ENCODE measurements at regions of chr1 and their contacts with region 1.

Region 1: DNA sequence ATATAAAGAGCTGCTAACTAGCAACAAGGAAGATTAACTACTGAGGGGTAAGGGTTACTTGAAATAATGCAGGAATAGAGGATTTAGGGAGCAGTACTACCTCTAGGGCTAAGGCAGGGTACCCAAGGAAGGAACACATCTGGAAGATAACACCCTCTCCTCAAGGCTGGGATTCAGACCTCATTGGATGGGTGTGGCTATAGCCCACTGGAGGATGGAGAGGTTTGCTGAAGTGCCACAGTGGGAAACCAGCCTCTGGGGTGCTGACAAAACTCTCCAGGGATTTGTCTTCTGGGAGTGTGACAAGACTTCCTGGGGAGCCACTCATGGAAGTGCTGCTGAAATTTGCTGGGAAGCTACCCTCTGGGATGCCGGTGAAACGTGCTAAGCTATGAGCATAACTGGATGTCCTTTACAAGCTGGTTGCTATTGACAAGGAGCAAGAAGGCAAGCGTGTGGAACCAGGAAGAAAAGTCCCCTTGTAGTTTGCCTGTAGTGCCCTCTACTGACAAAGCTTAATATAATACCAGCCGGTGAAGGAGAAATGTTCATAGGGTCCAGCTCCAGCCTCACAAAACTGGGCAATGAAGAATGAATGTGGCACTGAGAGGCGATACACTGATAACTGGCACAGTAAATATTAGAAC is 122.8 kb upstream of the USP24 start:
- DNase-seq: peak; percentile 7 to 66
- ATAC-seq: peak in 1 of 2 experiments; percentile 61; a peak in 3 of 6 replicates
- H3K4me3 ChIP-seq: no peak overlapping the region
- H3K27ac ChIP-seq: peak overlapping the region in 1 of 2 experiments; percentile 61; a peak in 2 of 6 replicates
- H3K4me1 ChIP-seq: no peaks in the 10 kb centered on the region
- CTCF ChIP-seq: no peak
- EP300 ChIP-seq: no peak
- POLR2A ChIP-seq: no peak
- RAD21 ChIP-seq: peak in 1 of 2 experiments; percentile 59; a peak in 3 of 5 replicates

Region 2: DNA sequence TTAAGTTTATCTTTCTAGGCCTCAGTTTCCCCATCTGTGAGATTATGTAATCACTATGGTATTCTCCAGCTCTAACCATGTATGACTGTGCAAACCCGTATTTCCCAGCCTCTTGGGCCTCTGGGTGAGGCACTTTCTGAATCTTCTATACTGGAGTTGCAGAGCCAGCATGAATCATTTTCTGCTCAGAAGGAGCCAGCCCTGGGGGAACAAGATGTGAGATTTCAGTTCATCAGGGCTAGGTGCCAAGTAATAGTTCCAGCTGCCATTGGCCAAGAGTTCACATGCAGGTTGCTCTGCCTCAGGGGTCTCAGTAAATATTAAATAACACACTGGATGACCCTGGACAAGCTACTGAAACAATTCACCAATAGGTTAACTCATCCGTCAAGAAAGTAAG is 75.1 kb before region 1 on chr1:
- CTCF ChIA-PET with region 1: no interaction called
- POLR2A ChIA-PET with region 1: no interaction called
- DNase-seq: no peak
- ATAC-seq: no peak
- H3K4me3 ChIP-seq: no peak overlapping the region
- H3K27ac ChIP-seq: no peak overlapping the region
- H3K4me1 ChIP-seq: no peaks in the 10 kb centered on the region
- CTCF ChIP-seq: no peak
- EP300 ChIP-seq: no peak
- POLR2A ChIP-seq: no peak
- RAD21 ChIP-seq: no peak

Region 3: GRCh38 chr1:55326496-55327243 is 11.3 kb before region 1 on chr1:
- CTCF ChIA-PET with region 1: interaction called, 10 read pairs
- POLR2A ChIA-PET with region 1: no interaction called
- DNase-seq: no peak
- ATAC-seq: no peak
- H3K4me3 ChIP-seq: no peak overlapping the region
- H3K27ac ChIP-seq: peak overlapping the region in 1 of 2 experiments; percentile 76; a peak in 3 of 6 replicates
- H3K4me1 ChIP-seq: peaks cover 33% of the 10 kb centered on the region
- CTCF ChIP-seq: no peak
- EP300 ChIP-seq: no peak
- POLR2A ChIP-seq: no peak
- RAD21 ChIP-seq: no peak

Region 4: DNA sequence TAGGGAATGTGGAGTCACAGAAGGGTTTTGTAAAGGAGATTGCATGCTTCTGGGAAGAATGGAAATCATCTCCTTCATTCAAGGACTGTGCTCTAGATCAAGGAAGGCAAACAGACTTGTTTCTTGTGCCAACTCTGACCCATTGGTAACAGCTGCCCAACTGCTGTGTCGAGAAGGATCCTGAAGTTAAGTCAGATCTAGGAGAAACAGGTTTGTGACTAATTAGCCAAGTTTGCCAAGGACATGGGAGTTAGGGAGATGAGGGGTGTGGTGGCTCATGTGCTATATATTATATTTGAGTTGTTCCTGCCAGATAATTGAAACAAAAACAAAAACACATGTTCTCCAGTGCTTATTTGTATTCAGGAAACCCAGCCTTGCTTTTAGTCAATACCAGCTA is 128.4 kb after region 1 on chr1:
- CTCF ChIA-PET with region 1: no interaction called
- POLR2A ChIA-PET with region 1: no interaction called
- DNase-seq: no peak
- ATAC-seq: no peak
- H3K4me3 ChIP-seq: no peak overlapping the region
- H3K27ac ChIP-seq: peak overlapping the region in 1 of 2 experiments; percentile 11; a peak in 2 of 6 replicates
- H3K4me1 ChIP-seq: no peaks in the 10 kb centered on the region
- CTCF ChIP-seq: no peak
- EP300 ChIP-seq: no peak
- POLR2A ChIP-seq: no peak
- RAD21 ChIP-seq: no peak

Measured in A549 (cell line).